CD8-positive, alpha-beta T cell (primary cell): ENCODE measurements at regions of chr9 and their contacts with region 1.

Region 1: DNA sequence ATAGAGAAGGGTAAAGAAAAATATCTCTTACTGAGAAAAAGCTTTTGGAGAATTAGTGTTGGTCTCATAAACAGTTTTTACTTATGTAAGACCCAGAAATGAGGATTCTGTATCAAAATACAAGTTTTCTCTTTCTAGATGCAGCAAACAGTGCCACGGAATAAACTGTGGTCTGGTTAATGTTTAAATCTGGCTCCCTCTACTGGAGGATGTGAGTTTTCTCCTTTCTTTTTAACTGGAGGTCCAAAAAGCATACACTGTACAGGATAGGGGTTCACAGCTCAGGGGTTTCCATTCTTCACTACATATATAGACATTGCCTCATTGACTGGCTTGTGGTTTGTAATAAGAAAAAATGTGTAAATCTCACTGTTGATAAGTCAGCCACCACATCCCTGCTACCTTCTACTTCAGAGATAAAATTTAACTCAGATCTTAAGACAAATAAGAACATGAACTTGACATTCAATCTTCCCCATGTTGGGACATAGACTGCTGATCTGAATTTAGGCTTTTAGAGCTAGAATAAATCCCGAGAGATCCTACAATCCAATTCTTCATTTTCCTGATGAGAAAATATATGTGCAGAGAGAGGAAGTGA is 98.9 kb downstream of the CFAP95 start:
- DNase-seq: peak in 2 of 9 experiments; percentile 37 to 59
- ATAC-seq: peak; percentile 57
- H3K4me3 ChIP-seq: no peak overlapping the region
- H3K4me3 Mint-ChIP-seq: no peak overlapping the region
- H3K27ac ChIP-seq: no peak overlapping the region
- H3K27ac Mint-ChIP-seq: no peak overlapping the region
- H3K4me1 ChIP-seq: no peaks in the 10 kb centered on the region
- H3K4me1 Mint-ChIP-seq: no peaks in the 10 kb centered on the region
- H3K27me3 ChIP-seq: no peaks in the 10 kb centered on the region
- H3K27me3 Mint-ChIP-seq: peaks cover 18% of the 10 kb centered on the region
- CTCF ChIP-seq: peak; percentile 68

Region 2: GRCh38 chr9:69421908-69422801 is 497.4 kb before region 1 on chr9:
- CTCF ChIA-PET with region 1: interaction called, 42 read pairs
- POLR2A ChIA-PET with region 1: no interaction called
- intact Hi-C with region 1: loop called (anchors 1 to 2 kb)
- DNase-seq: peak in 8 of 9 experiments; percentile 6 to 62 (median 40)
- ATAC-seq: no peak
- H3K4me3 ChIP-seq: no peak overlapping the region
- H3K4me3 Mint-ChIP-seq: no peak overlapping the region
- H3K27ac ChIP-seq: no peak overlapping the region
- H3K27ac Mint-ChIP-seq: no peak overlapping the region
- H3K4me1 ChIP-seq: no peaks in the 10 kb centered on the region
- H3K4me1 Mint-ChIP-seq: no peaks in the 10 kb centered on the region
- H3K27me3 ChIP-seq: no peaks in the 10 kb centered on the region
- H3K27me3 Mint-ChIP-seq: peaks cover 18% of the 10 kb centered on the region
- CTCF ChIP-seq: peak; percentile 63

Region 3: GRCh38 chr9:69672596-69673310 is 246.8 kb before region 1 on chr9:
- CTCF ChIA-PET with region 1: interaction called, 5 read pairs
- POLR2A ChIA-PET with region 1: no interaction called
- intact Hi-C with region 1: loop called in 1 of 2 experiments (anchors 5 kb)
- DNase-seq: peak; percentile 27 to 76 (median 69)
- ATAC-seq: peak; percentile 81
- H3K4me3 ChIP-seq: peak overlapping the region; percentile 58 to 73
- H3K4me3 Mint-ChIP-seq: peak overlapping the region; percentile 81
- H3K27ac ChIP-seq: no peak overlapping the region
- H3K27ac Mint-ChIP-seq: no peak overlapping the region
- H3K4me1 ChIP-seq: peaks cover 5% of the 10 kb centered on the region
- H3K4me1 Mint-ChIP-seq: peaks cover 18% of the 10 kb centered on the region
- H3K27me3 ChIP-seq: peaks cover 0 to 3% of the 10 kb centered on the region in 2 experiments
- H3K27me3 Mint-ChIP-seq: peaks cover 19% of the 10 kb centered on the region
- CTCF ChIP-seq: peak; percentile 76

Region 4: GRCh38 chr9:69809304-69809863 is 110.2 kb before region 1 on chr9:
- CTCF ChIA-PET with region 1: interaction called, 3 read pairs
- POLR2A ChIA-PET with region 1: no interaction called
- intact Hi-C with region 1: loop called (anchors 2 to 5 kb)
- DNase-seq: peak in 7 of 9 experiments; percentile 16 to 59 (median 25)
- ATAC-seq: peak; percentile 52
- H3K4me3 ChIP-seq: no peak overlapping the region
- H3K4me3 Mint-ChIP-seq: no peak overlapping the region
- H3K27ac ChIP-seq: no peak overlapping the region
- H3K27ac Mint-ChIP-seq: no peak overlapping the region
- H3K4me1 ChIP-seq: no peaks in the 10 kb centered on the region
- H3K4me1 Mint-ChIP-seq: no peaks in the 10 kb centered on the region
- H3K27me3 ChIP-seq: no peaks in the 10 kb centered on the region
- H3K27me3 Mint-ChIP-seq: peaks cover 3% of the 10 kb centered on the region
- CTCF ChIP-seq: peak; percentile 34

Region 5: GRCh38 chr9:69932901-69933300 is 13.3 kb after region 1 on chr9:
- CTCF ChIA-PET with region 1: interaction called, 20 read pairs
- POLR2A ChIA-PET with region 1: no interaction called
- intact Hi-C with region 1: no loop called
- DNase-seq: no peak
- ATAC-seq: no peak
- H3K4me3 ChIP-seq: no peak overlapping the region
- H3K4me3 Mint-ChIP-seq: no peak overlapping the region
- H3K27ac ChIP-seq: no peak overlapping the region
- H3K27ac Mint-ChIP-seq: no peak overlapping the region
- H3K4me1 ChIP-seq: no peaks in the 10 kb centered on the region
- H3K4me1 Mint-ChIP-seq: no peaks in the 10 kb centered on the region
- H3K27me3 ChIP-seq: no peaks in the 10 kb centered on the region
- H3K27me3 Mint-ChIP-seq: peaks cover 8% of the 10 kb centered on the region
- CTCF ChIP-seq: no peak

Region 6: DNA sequence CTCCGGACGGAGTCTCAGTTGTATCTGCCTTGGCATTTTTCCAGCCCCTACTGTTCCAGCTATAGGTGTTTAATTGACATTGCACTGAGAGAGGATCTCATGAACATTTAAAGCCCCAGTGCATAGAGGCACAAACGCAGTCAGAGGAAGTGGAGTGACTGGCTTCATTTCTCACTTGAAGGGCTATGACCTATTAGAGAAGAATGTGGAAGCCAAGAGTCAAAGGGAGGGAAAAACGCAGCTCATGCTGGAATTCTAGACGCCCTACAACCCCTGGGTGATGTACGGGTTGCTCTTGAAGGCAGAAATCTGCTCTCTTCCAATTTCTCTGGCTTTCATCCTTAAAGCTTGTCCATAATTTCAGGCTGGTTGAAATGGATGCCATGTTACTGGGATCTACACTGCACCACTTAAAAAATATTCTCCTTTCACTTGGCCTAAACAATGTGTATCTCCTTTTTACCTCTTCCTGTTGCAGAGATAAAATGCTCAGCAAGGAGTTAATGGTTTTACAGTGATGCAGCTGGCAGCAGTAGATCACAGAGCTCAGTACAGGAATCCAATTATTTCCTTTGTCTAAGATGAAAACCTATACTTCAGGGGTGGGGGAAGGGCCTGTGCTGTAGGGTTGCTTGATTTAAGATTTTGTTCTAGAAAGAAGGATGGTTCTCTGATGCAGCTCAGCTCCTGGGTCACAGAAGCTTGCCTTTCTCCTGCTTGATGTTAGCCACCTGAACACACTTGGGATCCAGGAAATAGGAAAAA is 62.3 kb after region 1 on chr9:
- CTCF ChIA-PET with region 1: no interaction called
- POLR2A ChIA-PET with region 1: no interaction called
- intact Hi-C with region 1: no loop called
- DNase-seq: no peak
- ATAC-seq: no peak
- H3K4me3 ChIP-seq: no peak overlapping the region
- H3K4me3 Mint-ChIP-seq: no peak overlapping the region
- H3K27ac ChIP-seq: no peak overlapping the region
- H3K27ac Mint-ChIP-seq: no peak overlapping the region
- H3K4me1 ChIP-seq: no peaks in the 10 kb centered on the region
- H3K4me1 Mint-ChIP-seq: no peaks in the 10 kb centered on the region
- H3K27me3 ChIP-seq: no peaks in the 10 kb centered on the region
- H3K27me3 Mint-ChIP-seq: peaks cover 27% of the 10 kb centered on the region
- CTCF ChIP-seq: no peak